ENCODE measurements at regions of chr2 and their contacts with region 1.

Region 1: DNA sequence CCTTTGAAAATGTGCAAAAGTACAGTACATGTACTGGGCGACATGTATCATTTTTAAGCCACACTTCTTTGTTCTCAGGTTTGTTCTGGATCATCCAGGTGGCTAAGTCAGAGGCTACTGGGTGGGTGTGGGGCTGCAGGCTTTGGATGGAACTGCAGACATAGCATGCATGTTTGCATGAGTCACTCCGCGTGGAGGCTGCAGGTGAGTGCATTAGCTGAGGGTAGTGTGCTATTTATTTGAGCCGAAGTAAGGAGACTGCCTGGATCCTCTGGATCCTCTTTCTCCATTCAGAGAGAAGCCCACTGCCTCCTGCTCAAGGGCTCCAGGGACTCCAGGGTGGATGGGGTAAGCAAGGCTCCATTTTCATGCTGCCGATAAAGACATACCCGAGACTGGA is 9.4 kb upstream of the NEURL3 start:
- DNase-seq: no peak
- H3K4me3 ChIP-seq: no peak overlapping the region
- H3K27ac ChIP-seq: no peak overlapping the region
- H3K27me3 ChIP-seq: no peaks in the 10 kb centered on the region
- CTCF ChIP-seq: no peak

Region 2: GRCh38 chr2:94776036-94776435 is 1738.5 kb before region 1 on chr2:
- intact Hi-C with region 1: no loop called
- DNase-seq: no peak
- H3K4me3 ChIP-seq: no peak overlapping the region
- H3K27ac ChIP-seq: no peak overlapping the region
- H3K27me3 ChIP-seq: peaks cover 0 to 4% (median 0%) of the 10 kb centered on the region in 45 donors
- CTCF ChIP-seq: no peak

Region 3: DNA sequence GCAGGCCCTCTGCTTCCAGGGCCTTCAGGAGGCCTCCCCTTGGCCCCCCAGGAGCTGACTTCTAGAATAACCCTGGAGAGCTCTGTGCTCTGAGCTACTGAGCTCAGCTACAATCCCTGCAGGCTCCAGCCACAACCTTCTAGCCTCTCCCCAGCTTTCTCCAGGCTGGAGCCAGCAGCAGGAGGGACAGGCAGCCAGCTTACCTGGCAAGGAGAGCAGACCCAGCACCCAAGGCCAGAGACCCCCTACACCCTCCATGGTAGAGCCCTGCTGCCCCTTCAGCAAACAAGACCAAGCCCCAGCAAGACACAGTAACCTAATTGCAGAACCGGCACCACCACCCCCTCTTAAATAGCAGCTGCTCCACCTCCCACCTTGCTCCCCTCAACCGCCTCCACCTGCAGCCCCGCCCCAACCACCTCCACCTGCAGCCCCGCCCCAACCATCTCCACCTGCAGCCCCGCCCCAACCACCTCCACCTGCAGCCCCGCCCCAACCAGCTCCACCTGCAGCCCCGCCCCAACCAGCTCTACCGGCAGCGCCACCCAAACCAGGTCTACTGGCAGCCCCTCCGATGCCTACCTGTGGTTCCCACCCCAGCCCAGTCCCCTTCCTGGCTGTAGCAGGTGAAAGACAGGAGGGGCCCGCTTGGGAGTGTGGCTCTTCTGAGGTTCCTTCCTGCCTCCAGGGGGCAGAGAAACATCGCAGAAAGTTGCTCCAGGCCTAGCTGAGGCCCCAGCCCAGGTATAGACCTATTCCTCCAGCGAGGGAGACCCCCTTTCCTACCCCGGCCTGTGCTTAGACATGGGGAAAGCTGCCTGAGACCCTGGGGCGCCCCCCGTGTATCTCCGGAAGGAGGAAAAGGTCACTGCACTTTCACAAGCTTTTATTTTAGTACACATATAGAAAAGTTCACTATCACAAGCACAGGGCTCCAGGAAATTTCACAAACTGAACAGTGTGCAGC is 376.1 kb before region 1 on chr2 and contains the start of gene ASTL:
- intact Hi-C with region 1: loop called (anchors 10 kb)
- DNase-seq: peak in 3 of 10 donors; percentile 27 to 61 (median 40)
- H3K4me3 ChIP-seq: no peak within 1 kb of the TSS
- H3K27ac ChIP-seq: no peak within 1 kb of the TSS
- H3K27me3 ChIP-seq: no peaks in the 10 kb centered on the region
- CTCF ChIP-seq: peak in 54 of 56 donors; percentile 21 to 77 (median 53)
- total RNA-seq, gene ASTL: 0.29 to 7.9 (median 0.86) TPM in 61 of 120 experiments, not detected in the others

Region 4: DNA sequence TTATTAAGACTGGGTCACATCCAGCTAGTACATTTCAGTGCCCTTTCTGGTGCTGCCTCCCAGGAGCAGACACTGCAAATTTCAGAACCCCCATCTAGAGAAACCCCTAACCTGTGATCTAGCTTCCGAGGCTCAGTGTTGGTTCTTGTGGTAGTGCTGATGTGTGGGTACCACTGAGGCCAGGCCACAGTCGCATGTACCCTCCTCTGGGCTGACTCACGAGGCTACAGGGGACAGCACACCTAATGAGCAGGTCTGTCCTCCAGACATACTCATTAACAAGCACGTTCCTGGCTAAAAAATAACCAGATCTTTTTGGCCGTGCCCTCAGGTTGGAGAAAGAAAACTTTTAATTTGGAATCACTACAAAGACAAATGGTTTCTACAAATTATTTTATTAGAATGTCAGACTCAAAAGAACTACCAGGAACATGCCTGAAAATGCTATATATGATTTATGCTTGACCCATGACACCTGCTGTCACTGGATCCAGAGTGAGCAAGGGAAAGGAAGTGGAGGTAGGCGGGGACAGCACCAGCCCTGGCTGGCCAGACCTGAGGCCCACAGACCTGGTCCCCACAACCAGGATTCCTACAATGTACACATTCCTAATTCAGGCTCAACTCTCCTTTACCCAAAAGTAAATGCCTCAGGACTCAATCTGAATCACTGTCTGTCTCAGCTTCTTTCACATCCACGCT is 240.0 kb before region 1 on chr2:
- intact Hi-C with region 1: no loop called
- DNase-seq: no peak
- H3K4me3 ChIP-seq: no peak overlapping the region
- H3K27ac ChIP-seq: no peak overlapping the region
- H3K27me3 ChIP-seq: no peaks in the 10 kb centered on the region
- CTCF ChIP-seq: no peak

Region 5: DNA sequence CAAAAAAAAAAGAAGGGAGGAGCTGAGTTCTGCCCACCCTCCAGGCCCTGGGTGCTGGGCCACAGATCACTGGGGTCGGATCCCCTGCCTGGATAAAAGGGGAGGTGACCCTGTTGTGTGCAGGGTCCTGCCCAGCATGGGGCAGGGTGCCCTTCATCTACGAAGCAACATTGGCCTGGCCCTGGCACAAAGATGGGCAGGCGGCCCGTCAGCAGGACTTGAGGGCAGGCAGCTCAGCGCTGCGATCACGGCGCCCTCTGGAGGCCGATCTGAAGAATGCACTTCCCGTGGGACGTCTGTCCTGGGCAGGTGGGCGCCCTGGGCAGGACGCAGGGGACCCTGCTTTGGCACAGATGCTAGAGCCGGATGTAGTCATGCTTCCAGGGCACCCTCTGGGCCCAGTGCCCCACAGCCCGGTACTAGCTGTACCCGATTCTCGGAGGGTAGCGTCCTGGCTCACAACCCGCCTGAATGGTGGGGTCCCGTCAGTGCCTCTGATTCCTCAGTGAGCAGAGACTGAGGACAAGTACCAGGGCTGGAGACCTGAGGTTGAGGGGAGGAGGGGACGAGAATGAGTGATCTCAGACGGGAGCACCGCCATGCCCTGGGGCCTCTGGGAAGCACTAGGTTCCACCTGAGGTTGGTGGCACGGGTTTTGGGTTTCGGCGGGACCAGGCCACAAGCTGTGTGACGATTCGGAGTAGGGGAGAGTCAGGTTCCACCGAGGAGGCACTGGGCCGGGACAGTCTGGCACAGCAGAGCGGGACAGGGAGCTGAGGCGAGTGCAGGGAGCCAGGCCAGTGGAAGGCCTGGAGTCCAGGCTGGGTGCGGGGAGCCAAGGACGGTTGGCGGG is 40.0 kb after region 1 on chr2:
- intact Hi-C with region 1: loop called in 1 of 2 experiments (anchors 5 kb)
- DNase-seq: peak; percentile 54 to 84 (median 70)
- H3K4me3 ChIP-seq: peak overlapping the region in 30 of 59 donors; percentile 3 to 50 (median 28)
- H3K27ac ChIP-seq: peak overlapping the region in 4 of 59 donors; percentile 6 to 47 (median 19)
- H3K27me3 ChIP-seq: no peaks in the 10 kb centered on the region
- CTCF ChIP-seq: peak; percentile 84 to 100 (median 97)

Region 6: GRCh38 chr2:96608469-96609455 is 94.2 kb after region 1 on chr2:
- intact Hi-C with region 1: no loop called
- DNase-seq: no peak
- H3K4me3 ChIP-seq: no peak overlapping the region
- H3K27ac ChIP-seq: peak overlapping the region in 2 of 59 donors; percentile 18 to 21
- H3K27me3 ChIP-seq: no peaks in the 10 kb centered on the region
- CTCF ChIP-seq: no peak

Region 7: DNA sequence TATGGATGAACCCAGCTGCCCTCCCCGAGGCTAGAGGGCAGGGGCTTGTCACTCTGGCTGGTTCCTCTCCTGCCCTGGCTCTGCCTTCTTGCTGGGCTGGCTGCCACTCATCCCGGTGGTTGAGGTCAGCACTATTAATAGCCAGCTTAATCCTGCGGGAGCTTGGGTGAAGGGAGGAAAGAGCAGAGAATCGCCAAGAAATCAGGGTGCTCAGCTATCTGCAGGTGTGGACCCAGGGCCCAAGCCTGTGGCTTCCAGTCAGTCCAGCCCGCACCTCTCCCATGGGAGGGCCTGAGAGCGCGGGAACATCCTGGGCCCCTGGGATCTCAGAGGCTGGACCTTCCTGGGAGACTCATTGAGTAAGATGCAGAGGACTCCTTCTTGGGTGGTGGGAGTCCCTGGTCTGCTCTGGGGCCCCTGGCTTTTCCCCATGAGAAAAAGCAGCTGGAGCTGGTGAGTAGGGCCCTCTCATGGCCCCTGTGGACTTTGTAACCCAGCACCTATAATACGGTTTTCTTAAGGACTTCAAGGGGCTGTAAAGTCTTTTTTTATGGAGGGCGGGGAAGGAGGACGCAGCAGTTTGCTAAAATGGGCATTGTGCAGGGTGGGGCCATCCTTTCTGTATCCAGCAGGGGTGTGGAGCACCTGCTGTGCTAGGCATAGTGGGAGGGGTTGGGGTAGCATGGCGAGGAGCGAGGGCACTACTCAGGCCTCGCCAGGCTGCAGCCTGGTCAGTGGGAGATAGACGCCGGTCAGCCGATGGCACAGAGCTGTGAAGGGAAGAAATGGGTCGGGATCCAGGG is 274.1 kb after region 1 on chr2:
- intact Hi-C with region 1: no loop called
- DNase-seq: peak in 8 of 10 donors; percentile 32 to 78 (median 56)
- H3K4me3 ChIP-seq: peak overlapping the region in 1 of 59 donors; percentile 16
- H3K27ac ChIP-seq: peak overlapping the region in 52 of 59 donors; percentile 19 to 81 (median 70)
- H3K27me3 ChIP-seq: no peaks in the 10 kb centered on the region
- CTCF ChIP-seq: no peak